CD8-positive, alpha-beta T cell (primary cell): ENCODE measurements at regions of chr14 and their contacts with region 1.

Region 1: GRCh38 chr14:39015360-39015961 is 87.6 kb downstream of the SEC23A start:
- DNase-seq: peak in 2 of 9 experiments; percentile 32 to 51
- ATAC-seq: no peak
- H3K4me3 ChIP-seq: no peak overlapping the region
- H3K4me3 Mint-ChIP-seq: no peak overlapping the region
- H3K27ac ChIP-seq: no peak overlapping the region
- H3K27ac Mint-ChIP-seq: no peak overlapping the region
- H3K4me1 ChIP-seq: no peaks in the 10 kb centered on the region
- H3K4me1 Mint-ChIP-seq: no peaks in the 10 kb centered on the region
- H3K27me3 ChIP-seq: no peaks in the 10 kb centered on the region
- H3K27me3 Mint-ChIP-seq: no peaks in the 10 kb centered on the region
- CTCF ChIP-seq: peak; percentile 83

Region 2: DNA sequence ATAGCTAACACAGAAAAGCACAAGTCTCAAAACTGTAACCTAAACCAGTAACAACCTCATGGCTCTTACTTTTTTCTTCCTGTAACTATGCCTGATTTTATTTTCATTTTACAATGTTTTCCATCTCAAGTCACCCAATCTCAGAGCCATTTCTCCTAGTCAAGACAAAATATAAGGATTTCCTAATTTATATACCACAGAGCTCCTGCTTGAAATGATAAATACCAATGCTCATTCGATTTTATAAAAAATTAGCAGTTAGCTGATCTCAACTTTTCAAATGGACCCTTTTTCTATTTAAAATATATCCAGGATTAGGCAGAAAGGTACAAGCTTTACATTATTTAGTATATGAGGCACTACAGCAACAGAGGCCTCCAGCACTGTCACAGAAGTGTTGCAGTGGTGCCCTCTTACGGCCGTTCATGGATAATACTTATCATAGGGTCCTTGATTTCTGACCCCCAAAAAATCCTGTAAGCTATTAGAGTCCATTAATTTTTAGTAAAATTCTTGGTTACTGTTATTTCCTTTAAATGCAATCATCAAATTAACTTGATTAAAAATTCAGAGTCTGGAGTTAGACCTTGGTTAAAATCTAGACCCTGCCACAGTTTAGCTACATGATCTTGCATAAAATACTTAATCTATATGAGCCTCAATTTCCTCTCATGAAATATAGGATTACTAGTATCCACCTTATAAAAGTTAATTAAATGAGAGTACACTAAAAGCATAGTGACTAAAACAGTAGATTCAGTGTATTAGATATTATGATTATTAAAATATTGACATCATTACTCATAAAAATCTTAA is 19.2 kb after region 1 on chr14:
- CTCF ChIA-PET with region 1: interaction called, 10 read pairs
- POLR2A ChIA-PET with region 1: no interaction called
- intact Hi-C with region 1: no loop called
- DNase-seq: no peak
- ATAC-seq: no peak
- H3K4me3 ChIP-seq: no peak overlapping the region
- H3K4me3 Mint-ChIP-seq: no peak overlapping the region
- H3K27ac ChIP-seq: no peak overlapping the region
- H3K27ac Mint-ChIP-seq: no peak overlapping the region
- H3K4me1 ChIP-seq: peaks cover 4% of the 10 kb centered on the region
- H3K4me1 Mint-ChIP-seq: peaks cover 11% of the 10 kb centered on the region
- H3K27me3 ChIP-seq: no peaks in the 10 kb centered on the region
- H3K27me3 Mint-ChIP-seq: no peaks in the 10 kb centered on the region
- CTCF ChIP-seq: no peak